Left ventricle myocardium inferior (tissue), 1 donor: ENCODE measurements at regions of chr12 and their contacts with region 1.

Region 1: DNA sequence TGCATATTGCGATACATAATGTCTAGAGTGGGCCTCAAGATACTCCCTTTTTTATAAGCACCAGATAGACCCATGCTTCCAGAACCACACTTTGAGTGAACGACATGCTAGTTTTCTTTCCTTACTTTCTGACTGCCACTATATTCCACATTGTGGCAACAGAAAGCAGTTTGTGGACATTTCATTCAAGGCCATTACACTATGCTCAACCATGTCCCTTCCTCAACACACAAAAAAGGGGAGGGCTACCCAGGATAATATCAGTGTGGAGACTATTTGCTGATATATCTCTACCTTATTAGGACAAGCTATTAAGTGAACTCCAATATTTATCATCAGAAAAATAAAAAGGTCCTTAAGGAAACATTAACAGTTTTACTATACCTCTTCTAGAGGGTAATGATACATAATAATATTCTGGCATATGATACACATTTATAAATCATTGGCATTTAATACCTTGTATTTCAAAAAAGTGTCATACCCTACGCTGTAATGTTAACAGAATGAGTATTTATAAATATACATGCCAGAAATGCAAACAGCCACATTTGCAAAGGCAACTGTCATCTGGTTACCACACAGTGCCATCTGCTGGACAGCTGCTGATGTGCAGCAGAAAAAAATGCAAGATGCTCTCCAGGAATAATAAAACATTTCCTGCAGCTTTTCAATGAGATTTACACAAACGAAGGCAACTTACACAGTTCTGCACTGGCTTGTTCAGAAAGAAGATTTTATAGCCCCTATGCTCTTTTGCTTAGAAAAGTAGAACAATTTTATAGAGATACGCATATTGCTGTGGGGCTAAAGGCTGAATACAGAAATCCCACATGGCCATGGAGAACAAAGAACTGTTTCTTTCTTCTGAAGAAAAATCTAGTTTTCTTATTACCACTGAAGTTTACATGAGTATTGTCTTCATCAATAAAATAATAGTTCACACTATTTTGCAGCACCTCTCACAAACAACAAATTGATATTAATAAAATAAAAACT is 182.2 kb upstream of the GRIP1 start:
- DNase-seq: peak; percentile 33
- H3K4me3 ChIP-seq: no peak overlapping the region
- H3K27ac ChIP-seq: no peak overlapping the region
- H3K4me1 ChIP-seq: no peaks in the 10 kb centered on the region
- H3K27me3 ChIP-seq: peaks cover 9% of the 10 kb centered on the region
- CTCF ChIP-seq: peak; percentile 89

Region 2: DNA sequence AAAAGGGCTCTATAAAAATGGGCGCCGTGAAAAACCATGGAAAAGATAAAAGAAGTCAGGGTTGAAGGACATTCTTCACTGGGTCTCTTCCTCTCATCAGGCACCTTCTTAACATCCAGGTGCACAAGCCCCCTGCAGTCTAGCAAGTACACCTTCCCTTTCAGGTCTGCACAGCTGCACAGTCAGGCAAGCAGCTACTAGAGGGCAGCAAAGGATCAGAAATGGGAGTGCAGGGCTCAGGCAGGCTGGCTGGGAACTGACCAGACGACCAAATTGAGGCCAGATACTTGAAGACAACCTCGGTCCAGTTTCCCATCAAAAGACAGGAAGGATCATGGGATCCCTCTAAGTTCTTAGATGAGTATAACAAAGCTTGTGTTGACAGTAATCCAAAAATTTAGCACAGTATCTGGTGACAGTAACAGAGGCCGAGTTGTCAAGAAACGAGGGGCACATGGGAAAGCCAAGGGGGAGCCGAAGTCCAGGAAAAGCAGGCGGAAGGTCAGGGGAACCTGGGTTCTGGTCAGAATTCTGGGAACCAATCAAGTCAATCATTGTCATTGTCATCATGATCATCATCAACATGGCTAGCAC is 172.1 kb before region 1 on chr12:
- intact Hi-C with region 1: loop called (anchors 5 kb)
- DNase-seq: no peak
- H3K4me3 ChIP-seq: no peak overlapping the region
- H3K27ac ChIP-seq: no peak overlapping the region
- H3K4me1 ChIP-seq: peaks cover 9% of the 10 kb centered on the region
- H3K27me3 ChIP-seq: peaks cover 14% of the 10 kb centered on the region
- CTCF ChIP-seq: peak; percentile 67